ENCODE measurements at regions of chr5 and their contacts with region 1.

Region 1: DNA sequence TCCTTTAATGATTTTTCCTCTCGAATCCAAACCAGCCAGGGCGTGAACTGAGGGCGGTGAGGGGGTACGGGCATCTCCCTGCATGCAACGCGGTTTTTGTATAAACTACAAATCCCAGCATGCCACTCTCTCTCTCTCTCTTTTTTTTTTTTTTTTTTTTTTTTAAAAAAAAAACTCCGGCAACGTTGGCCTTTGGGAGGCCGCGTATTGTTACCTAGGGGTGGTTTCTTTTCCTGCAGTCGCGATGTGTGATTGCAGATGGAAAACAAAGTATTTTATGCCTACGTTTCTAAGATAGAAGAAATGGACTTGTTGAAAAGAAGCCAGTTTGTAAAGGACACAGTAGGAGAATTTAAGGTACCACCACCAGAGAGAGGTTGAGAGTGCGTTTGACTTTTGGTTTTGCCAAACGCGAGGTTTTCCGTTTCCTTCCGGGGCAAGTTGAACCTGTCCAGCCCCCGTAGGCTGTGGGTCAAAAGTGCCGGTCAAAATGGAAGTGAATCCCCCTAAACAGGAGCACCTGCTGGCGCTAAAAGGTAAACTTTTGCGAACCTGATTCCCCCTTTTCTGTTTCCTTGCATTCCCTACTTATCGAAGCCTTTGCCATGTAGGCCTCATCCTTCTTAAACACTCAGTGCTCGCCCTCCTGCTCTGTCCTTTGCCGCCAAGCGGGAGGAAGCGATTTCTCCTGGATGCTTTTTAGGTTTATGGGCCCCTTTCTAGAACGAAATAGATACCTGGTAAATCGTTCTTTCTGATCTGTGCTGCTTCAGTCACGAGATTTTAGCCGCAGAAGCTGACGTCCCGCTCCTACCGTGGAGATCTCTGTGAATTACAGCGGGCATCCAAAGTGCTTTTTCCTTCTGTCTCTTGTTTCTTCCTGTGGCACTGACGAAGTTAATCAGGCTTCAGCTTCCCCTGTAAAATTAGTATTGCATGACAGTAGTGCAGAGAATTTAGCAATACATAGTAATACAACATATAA is at the starts of genes SHLD3 and TRAPPC13:
- DNase-seq: peak; percentile 57 to 92 (median 91)
- ATAC-seq: peak; percentile 86
- H3K4me3 ChIP-seq: peak within 1 kb of the TSS; percentile 75
- H3K4me3 Mint-ChIP-seq: peak within 1 kb of the TSS; percentile 93 to 100 (median 98)
- H3K27ac ChIP-seq: peak within 1 kb of the TSS; percentile 92
- H3K27ac Mint-ChIP-seq: peak within 1 kb of the TSS; percentile 97 to 100 (median 98)
- H3K4me1 ChIP-seq: peaks cover 20% of the 10 kb centered on the region in 2 donors
- H3K4me1 Mint-ChIP-seq: peaks cover 14 to 73% (median 51%) of the 10 kb centered on the region in 7 donors
- H3K27me3 ChIP-seq: no peaks in the 10 kb centered on the region
- H3K27me3 Mint-ChIP-seq: peaks cover 0 to 3% (median 0%) of the 10 kb centered on the region in 5 donors
- total RNA-seq, gene SHLD3: 4.8 to 11.3 (median 5.8) TPM
- total RNA-seq, gene TRAPPC13: 18.2 to 23.1 (median 20.8) TPM

Region 2: GRCh38 chr5:64768358-64769312 is 856.2 kb before region 1 on chr5 and contains the starts of genes CWC27 and SREK1IP1:
- CTCF ChIA-PET with region 1: no interaction called
- POLR2A ChIA-PET with region 1: interaction called, 9 read pairs
- intact Hi-C with region 1: loop called (anchors 1 kb)
- DNase-seq: peak; percentile 65 to 88 (median 83)
- ATAC-seq: peak; percentile 98
- H3K4me3 ChIP-seq: peak within 1 kb of the TSS; percentile 90
- H3K4me3 Mint-ChIP-seq: peak within 1 kb of the TSS; percentile 94 to 100 (median 99)
- H3K27ac ChIP-seq: peak within 1 kb of the TSS; percentile 88
- H3K27ac Mint-ChIP-seq: peak within 1 kb of the TSS; percentile 96 to 100 (median 98)
- H3K4me1 ChIP-seq: peaks cover 21 to 37% of the 10 kb centered on the region in 2 donors
- H3K4me1 Mint-ChIP-seq: peaks cover 34 to 80% (median 77%) of the 10 kb centered on the region in 7 donors
- H3K27me3 ChIP-seq: no peaks in the 10 kb centered on the region
- H3K27me3 Mint-ChIP-seq: no peaks in the 10 kb centered on the region
- total RNA-seq, gene CWC27: 17.8 to 27.4 (median 21.0) TPM
- total RNA-seq, gene SREK1IP1: 11.7 to 29.9 (median 21.7) TPM